ENCODE measurements at regions of chr1 and their contacts with region 1.

Region 1: DNA sequence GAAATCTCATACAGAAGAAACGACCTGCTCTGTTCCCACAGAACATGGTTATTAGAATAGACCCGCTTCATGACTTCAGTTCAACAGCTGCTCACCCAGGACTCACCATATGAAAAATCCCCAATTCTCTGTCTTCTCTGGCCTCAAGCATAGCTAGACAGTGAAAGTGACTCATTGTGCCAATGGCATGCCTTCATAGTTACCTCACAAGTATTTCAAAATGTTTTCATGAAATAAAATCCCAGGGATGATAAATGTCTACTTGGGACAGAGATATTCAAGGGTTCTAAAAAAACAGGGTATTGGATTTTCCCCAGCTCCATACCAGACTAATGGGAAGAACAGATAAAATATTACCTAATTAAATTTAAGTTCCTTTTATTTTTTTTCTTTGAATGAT is 82.3 kb downstream of the NOTCH2 start:
- DNase-seq: no peak
- CTCF ChIP-seq: no peak

Region 2: DNA sequence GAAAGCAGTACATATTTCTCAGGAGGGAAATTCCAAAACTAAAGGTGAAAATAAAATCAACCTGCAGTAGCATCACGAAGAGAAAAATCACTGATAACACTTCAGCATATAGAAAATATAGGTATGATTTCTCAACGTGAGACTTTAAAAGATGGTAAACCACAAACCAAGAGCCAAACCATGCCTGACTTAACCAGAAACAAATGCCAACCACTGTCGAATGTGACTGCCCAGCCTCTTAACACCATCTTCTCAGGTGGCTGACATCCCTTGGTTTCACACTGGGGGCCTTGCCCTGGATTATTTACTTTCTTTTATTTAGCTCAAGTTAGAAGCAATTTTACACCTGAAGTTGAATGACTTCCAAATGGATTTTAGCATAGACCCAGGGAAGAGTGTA is 228.5 kb before region 1 on chr1:
- in situ Hi-C with region 1: no loop called
- DNase-seq: no peak
- CTCF ChIP-seq: no peak

Region 3: GRCh38 chr1:119853155-119853554 is 134.0 kb before region 1 on chr1:
- in situ Hi-C with region 1: no loop called
- DNase-seq: no peak
- CTCF ChIP-seq: no peak

Region 4: GRCh38 chr1:119929643-119930315 is 57.3 kb before region 1 on chr1:
- in situ Hi-C with region 1: loop called (anchors 10 kb)
- DNase-seq: no peak
- CTCF ChIP-seq: no peak